Heart right ventricle (tissue), 16 donors: ENCODE measurements at regions of chr3 and their contacts with region 1.

Region 1: DNA sequence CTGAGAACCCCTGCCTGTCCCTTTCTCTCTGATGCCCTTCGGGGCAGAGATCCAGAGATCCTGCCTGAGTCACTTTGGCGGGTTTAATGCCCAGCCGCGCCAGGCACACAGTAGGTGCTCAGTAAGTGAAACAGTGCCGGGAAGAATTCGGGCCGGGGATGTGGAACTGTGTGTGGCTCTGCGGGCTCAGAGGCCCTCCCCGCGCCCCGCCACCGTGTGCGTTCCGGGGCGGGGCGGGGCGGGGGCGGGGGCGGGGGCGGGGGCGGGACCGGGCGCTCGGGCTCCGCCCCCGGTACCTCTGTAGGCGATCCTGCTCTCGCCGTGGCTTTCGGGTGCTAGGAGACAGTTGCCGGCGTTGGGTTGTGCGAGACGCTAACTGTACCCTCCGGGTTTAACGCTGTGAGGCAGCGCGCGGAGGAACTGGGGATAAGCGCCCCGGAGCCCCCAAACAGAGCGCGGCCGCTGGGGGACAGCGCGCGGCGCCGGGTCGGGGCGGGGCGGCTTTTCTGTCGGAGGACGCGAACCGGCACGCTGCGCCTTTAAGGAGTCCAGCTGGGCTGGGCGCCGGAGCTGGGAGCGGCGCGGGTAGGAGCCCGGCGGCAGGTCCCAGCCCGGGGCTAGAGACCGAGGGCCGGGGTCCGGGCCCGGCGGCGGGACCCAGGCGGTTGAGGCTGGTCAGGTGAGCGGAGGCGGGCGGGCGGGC is at the start of gene ABHD6:
- DNase-seq: peak; percentile 74 to 82
- ATAC-seq: peak; percentile 93 to 96 (median 94)
- H3K4me3 ChIP-seq: peak within 1 kb of the TSS; percentile 88 to 95 (median 91)
- H3K27ac ChIP-seq: peak within 1 kb of the TSS in 9 of 10 donors; percentile 74 to 90 (median 78)
- H3K4me1 ChIP-seq: peaks cover 0 to 35% (median 17%) of the 10 kb centered on the region in 9 donors
- H3K27me3 ChIP-seq: no peaks in the 10 kb centered on the region
- CTCF ChIP-seq: peak in 7 of 9 donors; percentile 5 to 61 (median 48)
- total RNA-seq, gene ABHD6: 3.1 to 11.6 (median 6.3) TPM

Region 2: GRCh38 chr3:58188173-58188564 is 49.2 kb before region 1 on chr3:
- intact Hi-C with region 1: loop called in 1 of 10 experiments (anchors 10 kb)
- DNase-seq: no peak
- ATAC-seq: no peak
- H3K4me3 ChIP-seq: no peak overlapping the region
- H3K27ac ChIP-seq: peak overlapping the region in 5 of 10 donors; percentile 33 to 59 (median 50)
- H3K4me1 ChIP-seq: peaks cover 0 to 26% (median 18%) of the 10 kb centered on the region in 9 donors
- H3K27me3 ChIP-seq: no peaks in the 10 kb centered on the region
- CTCF ChIP-seq: no peak

Region 3: DNA sequence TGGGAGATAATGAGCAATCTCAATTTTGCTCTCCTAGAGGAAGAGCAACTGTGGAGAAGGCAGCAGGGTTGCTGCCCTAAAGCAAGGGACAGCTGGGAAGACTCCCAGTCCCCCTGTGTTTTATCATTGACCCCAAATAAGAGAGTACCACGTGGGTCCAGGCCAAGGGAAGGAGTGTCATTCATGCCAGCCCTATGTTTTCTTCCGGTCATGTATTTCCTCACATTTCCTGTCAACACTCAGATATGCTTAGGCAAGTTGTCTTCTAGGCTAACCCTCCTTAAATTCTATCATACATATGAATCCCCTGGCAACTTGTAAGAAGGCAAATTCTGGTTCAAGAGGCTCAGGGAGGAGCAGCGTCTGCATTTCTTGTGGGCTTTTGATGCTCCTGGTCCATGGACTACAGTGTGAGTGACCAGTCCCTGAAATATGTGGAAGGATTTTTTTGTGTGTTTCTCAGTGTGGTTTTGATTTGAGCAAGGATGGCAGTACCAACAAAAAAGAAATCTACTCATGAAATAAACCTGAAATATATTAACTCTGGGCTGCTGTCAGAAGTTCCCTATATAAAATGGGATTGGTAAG is 36.7 kb after region 1 on chr3:
- intact Hi-C with region 1: no loop called
- DNase-seq: no peak
- ATAC-seq: no peak
- H3K4me3 ChIP-seq: no peak overlapping the region
- H3K27ac ChIP-seq: peak overlapping the region in 1 of 10 donors; percentile 67
- H3K4me1 ChIP-seq: peaks cover 0 to 34% (median 0%) of the 10 kb centered on the region in 9 donors
- H3K27me3 ChIP-seq: no peaks in the 10 kb centered on the region
- CTCF ChIP-seq: no peak

Region 4: DNA sequence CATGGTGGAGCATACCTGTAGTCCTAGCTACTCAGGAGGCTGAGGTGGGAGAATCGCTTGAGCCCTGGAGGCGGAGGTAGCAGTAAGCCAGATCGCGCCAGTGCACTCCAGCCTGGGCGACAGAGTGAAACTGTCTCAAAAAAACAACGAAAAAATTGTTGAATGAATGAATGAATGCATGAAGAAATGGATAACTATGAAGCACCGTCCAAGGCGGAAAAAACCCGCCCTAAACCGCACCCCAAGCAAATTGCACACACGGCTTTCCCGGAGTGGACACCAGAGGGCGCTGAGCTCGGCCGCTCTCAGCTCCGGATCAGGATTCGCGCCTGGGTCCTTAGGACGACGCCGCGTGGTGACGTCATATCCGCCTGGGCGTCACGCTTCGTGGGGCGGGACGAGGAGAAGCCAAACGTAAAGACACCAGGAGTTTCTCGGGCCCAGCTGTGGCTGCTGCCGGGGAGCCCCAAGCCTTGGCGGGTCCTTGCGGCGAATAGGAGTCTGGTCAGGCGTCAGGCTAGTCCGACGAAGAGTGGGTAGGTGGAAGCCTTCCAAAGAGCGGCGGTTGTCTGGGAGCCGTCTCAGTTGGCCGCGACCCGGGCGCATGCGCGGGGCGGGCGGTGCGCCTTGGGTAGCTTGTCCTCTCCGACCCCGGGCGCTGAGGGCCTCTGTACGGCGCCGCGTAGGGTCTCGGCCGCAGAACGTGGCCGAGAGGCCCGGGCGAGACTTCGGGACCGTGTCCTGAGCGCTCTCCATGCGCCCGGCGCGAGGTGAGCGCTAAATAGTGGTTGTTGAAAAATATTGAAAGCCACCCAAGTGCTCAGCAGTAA is 68.7 kb after region 1 on chr3 and contains the starts of genes HTD2 and RPP14:
- intact Hi-C with region 1: loop called in 3 of 10 experiments (anchors 5 to 10 kb)
- DNase-seq: peak; percentile 98 to 99
- ATAC-seq: peak; percentile 95 to 98 (median 96)
- H3K4me3 ChIP-seq: peak within 1 kb of the TSS; percentile 73 to 93 (median 87)
- H3K27ac ChIP-seq: peak within 1 kb of the TSS; percentile 95 to 99 (median 97)
- H3K4me1 ChIP-seq: peaks cover 0 to 40% (median 32%) of the 10 kb centered on the region in 9 donors
- H3K27me3 ChIP-seq: no peaks in the 10 kb centered on the region
- CTCF ChIP-seq: peak; percentile 94 to 99 (median 98)
- total RNA-seq, gene HTD2: 11.2 to 19.5 (median 13.1) TPM
- total RNA-seq, gene RPP14: 19.9 to 34.4 (median 24.3) TPM